Activated CD4-positive, alpha-beta T cell treated with anti-CD3 and anti-CD28 coated beads for 36 hours (primary cell): ENCODE measurements at regions of chr14 and their contacts with region 1.

Region 1: DNA sequence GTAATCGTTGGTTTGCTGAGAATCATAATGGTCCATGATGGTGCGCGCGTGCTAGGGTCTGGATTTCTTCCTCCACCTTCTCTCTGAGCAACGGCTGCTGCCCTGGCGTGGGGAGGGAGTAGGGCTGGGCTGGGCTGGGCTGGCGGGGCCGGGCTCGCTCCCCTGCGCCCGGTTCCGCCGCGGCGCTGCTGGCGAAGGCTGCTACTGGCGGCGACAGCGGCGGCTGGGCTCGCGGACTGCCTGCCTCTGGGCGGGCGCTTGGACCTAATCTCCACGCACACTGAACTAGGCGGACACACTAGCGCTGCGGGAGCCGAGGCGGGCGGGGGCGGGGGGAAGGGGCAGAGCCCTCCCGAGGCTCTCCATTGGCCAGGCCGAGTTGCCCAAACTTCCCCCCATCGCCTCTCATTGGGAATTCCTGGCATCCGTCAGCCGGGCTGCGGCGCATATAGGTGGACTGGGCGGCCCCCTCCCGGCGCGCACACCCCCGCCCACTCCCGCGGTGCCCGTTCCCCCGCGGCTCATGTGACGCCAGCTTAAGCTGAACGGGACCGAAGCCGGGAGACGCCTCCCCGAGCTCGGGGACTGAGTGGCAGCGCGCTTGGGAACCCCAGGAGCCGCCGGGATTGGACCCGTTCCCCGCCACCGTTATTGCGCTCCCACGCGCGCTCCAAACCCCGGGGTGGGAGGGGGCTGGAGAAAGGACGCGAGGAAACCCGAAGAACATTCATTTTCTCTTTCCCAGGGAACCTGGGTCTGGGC is at the start of gene ACTN1:
- DNase-seq: peak; percentile 84
- ATAC-seq: peak; percentile 72
- H3K4me3 Mint-ChIP-seq: peak within 1 kb of the TSS; percentile 79
- H3K27ac Mint-ChIP-seq: peak within 1 kb of the TSS; percentile 88
- H3K4me1 Mint-ChIP-seq: peaks cover 38% of the 10 kb centered on the region
- H3K27me3 Mint-ChIP-seq: peaks cover 2% of the 10 kb centered on the region
- total RNA-seq, gene ACTN1: 92.8 to 146 TPM

Region 2: GRCh38 chr14:68939893-68940613 is 39.1 kb before region 1 on chr14:
- CTCF ChIA-PET with region 1: interaction called, 4 read pairs
- POLR2A ChIA-PET with region 1: no interaction called
- intact Hi-C with region 1: loop called in 1 of 2 experiments (anchors 5 kb)
- DNase-seq: no peak
- ATAC-seq: no peak
- H3K4me3 Mint-ChIP-seq: no peak overlapping the region
- H3K27ac Mint-ChIP-seq: no peak overlapping the region
- H3K4me1 Mint-ChIP-seq: peaks cover 80% of the 10 kb centered on the region
- H3K27me3 Mint-ChIP-seq: no peaks in the 10 kb centered on the region

Region 3: GRCh38 chr14:68955164-68955921 is 23.9 kb before region 1 on chr14:
- CTCF ChIA-PET with region 1: interaction called, 5 read pairs
- POLR2A ChIA-PET with region 1: no interaction called
- intact Hi-C with region 1: loop called in 1 of 2 experiments (anchors 2 kb)
- DNase-seq: no peak
- ATAC-seq: no peak
- H3K4me3 Mint-ChIP-seq: no peak overlapping the region
- H3K27ac Mint-ChIP-seq: peak overlapping the region; percentile 37
- H3K4me1 Mint-ChIP-seq: peaks cover 82% of the 10 kb centered on the region
- H3K27me3 Mint-ChIP-seq: no peaks in the 10 kb centered on the region

Region 4: DNA sequence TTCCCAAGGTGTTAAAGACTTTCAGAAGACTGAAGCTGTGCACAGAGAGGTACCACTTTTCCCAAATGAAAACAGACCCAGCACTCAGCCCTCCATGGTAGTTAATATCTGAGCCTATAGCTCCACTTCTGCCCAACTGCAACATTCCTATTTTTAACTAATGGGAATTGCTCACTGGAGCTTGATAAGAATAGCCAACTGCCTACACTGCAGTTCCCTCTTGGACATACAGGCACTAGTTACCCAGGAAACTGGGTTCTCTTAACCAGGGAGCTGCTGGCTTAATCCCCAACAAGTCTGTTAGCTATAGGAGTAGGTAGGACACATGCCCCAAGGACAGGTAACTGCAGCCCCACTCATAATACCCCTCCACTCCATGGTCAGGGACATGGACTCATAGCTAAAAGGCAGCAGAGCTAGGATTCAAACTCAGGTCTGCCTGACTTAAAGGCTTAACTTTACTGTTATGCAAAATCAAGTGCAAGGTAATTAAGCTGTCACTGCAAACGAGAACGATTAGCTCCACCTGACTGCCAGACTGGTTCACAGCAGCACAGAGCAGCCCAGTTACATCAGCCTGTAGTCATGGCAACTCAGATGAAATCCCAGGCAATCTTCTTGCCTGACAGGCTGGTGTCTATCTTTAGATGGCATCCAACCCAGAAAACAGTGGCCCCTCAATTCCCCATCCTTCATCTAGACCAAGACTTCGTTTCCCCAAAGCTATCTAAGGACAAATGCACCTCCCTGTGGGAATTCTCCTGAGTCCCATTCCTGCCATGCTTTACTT is 77.0 kb after region 1 on chr14:
- CTCF ChIA-PET with region 1: no interaction called
- POLR2A ChIA-PET with region 1: interaction called, 3 read pairs
- intact Hi-C with region 1: loop called in 1 of 2 experiments (anchors 1 kb)
- DNase-seq: peak; percentile 50
- ATAC-seq: peak; percentile 71
- H3K4me3 Mint-ChIP-seq: no peak overlapping the region
- H3K27ac Mint-ChIP-seq: peak overlapping the region; percentile 47
- H3K4me1 Mint-ChIP-seq: peaks cover 19% of the 10 kb centered on the region
- H3K27me3 Mint-ChIP-seq: no peaks in the 10 kb centered on the region